Gastrocnemius medialis (tissue), 4 donors: ENCODE measurements at regions of chr10 and their contacts with region 1.

Region 1: DNA sequence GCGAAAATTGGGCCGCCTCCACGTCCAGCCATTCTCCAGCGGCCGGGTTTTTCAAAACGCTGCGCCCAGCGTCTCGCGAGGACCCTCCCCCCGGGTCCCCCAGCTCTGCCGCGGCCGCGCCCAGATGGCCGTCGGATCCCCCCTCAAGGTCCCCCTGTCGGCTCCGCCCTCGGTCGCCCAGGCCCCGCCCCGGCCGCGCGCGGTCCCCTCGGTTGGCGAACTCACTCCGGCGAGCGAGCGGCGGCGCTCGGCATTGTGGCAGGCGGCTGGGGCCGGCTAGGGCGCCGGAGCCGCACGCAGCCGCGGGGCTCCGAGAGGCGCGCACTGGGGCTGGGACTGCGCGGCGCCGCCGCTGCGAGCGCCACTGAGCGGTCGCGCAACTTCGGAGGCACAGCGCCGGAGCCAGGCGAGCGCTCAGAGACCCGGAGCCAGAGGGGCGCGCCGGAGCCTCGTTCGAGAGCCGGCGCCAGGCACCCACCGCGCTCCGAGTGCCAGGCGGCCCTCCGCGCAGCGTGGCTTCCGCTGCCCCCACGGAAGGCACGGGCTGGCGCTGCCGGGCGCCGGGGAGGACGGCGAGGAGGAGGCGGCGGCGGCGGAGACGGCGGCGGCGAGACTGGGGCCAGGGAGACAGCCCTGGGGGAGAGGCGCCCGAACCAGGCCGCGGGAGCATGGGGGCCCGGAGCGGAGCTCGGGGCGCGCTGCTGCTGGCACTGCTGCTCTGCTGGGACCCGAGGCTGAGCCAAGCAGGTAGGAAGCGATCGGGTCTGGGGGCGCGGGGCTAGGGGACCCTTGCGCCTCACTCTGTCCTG is at the start of gene UNC5B:
- DNase-seq: peak; percentile 78 to 86
- ATAC-seq: peak; percentile 69 to 76
- H3K4me3 ChIP-seq: peak within 1 kb of the TSS; percentile 70 to 96 (median 82)
- H3K27ac ChIP-seq: peak within 1 kb of the TSS; percentile 75 to 92 (median 86)
- H3K4me1 ChIP-seq: peaks cover 20 to 26% of the 10 kb centered on the region in 2 donors
- H3K27me3 ChIP-seq: peaks cover 0 to 3% (median 0%) of the 10 kb centered on the region in 3 donors
- CTCF ChIP-seq: peak; percentile 35 to 63 (median 57)
- POLR2A ChIP-seq: peak; percentile 86 to 91
- total RNA-seq, gene UNC5B: 0.65 to 1.2 (median 0.90) TPM

Region 2: DNA sequence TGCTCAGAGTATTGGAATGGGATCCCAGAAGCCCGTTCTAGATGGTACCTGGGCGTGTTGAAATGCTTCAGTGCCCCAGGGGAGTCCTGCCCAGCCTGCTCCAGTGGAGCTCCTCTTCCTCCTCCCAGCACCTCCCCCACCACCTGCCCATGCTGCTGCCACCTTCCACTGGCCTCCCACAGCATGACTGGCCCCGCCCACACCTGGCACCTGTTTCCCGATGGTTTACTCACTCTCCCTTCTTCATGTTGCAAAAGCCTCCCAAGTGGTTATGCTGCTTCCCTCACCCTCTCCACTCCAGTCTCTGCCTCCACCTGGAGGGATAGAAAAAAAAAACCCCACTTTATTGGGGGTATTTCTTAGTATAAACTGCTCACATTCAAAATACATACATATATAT is 292.0 kb before region 1 on chr10:
- in situ Hi-C with region 1: loop called in 2 of 4 experiments (anchors 5 to 10 kb)
- intact Hi-C with region 1: loop called (anchors 1 kb)
- DNase-seq: no peak
- ATAC-seq: no peak
- H3K4me3 ChIP-seq: no peak overlapping the region
- H3K27ac ChIP-seq: no peak overlapping the region
- H3K4me1 ChIP-seq: no peaks in the 10 kb centered on the region
- H3K27me3 ChIP-seq: peaks cover 0 to 3% (median 0%) of the 10 kb centered on the region in 3 donors
- CTCF ChIP-seq: no peak
- POLR2A ChIP-seq: no peak

Region 3: GRCh38 chr10:70925377-70926225 is 286.9 kb before region 1 on chr10:
- in situ Hi-C with region 1: loop called in 2 of 4 experiments (anchors 5 to 10 kb)
- intact Hi-C with region 1: loop called (anchors 1 kb)
- DNase-seq: no peak
- ATAC-seq: peak; percentile 68 to 81
- H3K4me3 ChIP-seq: no peak overlapping the region
- H3K27ac ChIP-seq: no peak overlapping the region
- H3K4me1 ChIP-seq: no peaks in the 10 kb centered on the region
- H3K27me3 ChIP-seq: no peaks in the 10 kb centered on the region
- CTCF ChIP-seq: peak; percentile 82 to 98 (median 93)
- POLR2A ChIP-seq: no peak

Region 4: GRCh38 chr10:71068861-71069271 is 143.7 kb before region 1 on chr10:
- in situ Hi-C with region 1: no loop called
- intact Hi-C with region 1: loop called (anchors 2 kb)
- DNase-seq: peak; percentile 49 to 67
- ATAC-seq: peak; percentile 75 to 91
- H3K4me3 ChIP-seq: no peak overlapping the region
- H3K27ac ChIP-seq: peak overlapping the region; percentile 7 to 74 (median 54)
- H3K4me1 ChIP-seq: peaks cover 16 to 24% of the 10 kb centered on the region in 2 donors
- H3K27me3 ChIP-seq: no peaks in the 10 kb centered on the region
- CTCF ChIP-seq: no peak
- POLR2A ChIP-seq: no peak

Region 5: DNA sequence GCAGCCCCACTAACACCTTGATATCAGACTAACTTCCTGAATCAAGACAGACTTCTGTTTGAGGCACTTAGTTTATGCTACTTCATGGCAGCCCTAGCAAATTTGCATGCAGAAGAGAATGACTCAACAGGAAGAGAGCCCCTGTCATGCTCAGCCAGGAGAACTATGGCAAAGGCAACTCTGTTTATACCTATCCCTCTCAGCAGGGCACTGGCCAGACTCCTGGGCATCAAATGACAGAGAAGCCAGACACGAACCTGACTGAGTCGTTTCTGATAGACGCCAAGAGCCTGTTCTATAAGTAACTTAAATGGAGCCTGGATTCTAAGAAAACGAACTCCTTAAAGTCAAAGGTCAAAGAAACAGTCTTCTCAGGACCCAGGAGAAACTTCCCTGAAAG is 51.1 kb before region 1 on chr10:
- in situ Hi-C with region 1: no loop called
- intact Hi-C with region 1: no loop called
- DNase-seq: peak; percentile 18 to 41
- ATAC-seq: peak; percentile 75 to 78
- H3K4me3 ChIP-seq: no peak overlapping the region
- H3K27ac ChIP-seq: no peak overlapping the region
- H3K4me1 ChIP-seq: peaks cover 11 to 23% of the 10 kb centered on the region in 2 donors
- H3K27me3 ChIP-seq: no peaks in the 10 kb centered on the region
- CTCF ChIP-seq: no peak
- POLR2A ChIP-seq: no peak

Region 6: DNA sequence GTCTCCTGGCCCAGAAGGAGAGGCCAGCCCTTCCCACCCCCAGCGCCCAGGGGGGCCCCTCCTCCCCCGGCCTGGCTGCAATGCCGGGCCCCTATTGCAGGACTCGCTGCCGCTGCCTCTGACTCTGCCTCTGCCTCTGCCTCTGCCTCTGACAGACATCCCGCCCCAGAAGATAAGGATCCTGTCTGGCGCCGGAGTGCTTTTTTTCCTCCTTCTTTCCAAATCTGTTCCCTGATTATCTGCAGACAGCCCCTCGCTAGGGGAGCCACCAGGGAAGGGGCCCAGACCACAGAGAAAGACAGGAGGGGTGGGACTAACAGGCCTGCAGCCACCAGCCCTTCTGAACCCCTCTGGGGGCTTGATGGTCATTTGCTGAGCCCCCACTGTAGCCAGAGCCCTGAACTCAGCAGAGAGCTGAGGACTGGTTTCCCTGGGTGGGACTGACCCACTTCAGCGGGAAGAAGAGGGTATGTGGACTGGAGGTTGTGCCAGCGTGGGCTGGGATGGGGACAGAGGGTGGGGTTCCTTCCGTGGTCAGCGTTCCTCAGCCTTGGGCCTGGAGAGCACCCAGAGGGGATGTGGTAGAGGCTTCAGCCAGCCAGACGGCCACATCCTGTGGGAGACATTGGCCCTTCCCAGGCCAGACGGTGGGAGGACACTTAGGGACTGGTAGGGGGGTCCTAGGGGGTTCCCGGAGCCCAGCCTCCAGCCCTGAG is 22.6 kb after region 1 on chr10:
- in situ Hi-C with region 1: no loop called
- intact Hi-C with region 1: loop called (anchors 1 kb)
- DNase-seq: peak in 1 of 2 donors; percentile 33
- ATAC-seq: no peak
- H3K4me3 ChIP-seq: no peak overlapping the region
- H3K27ac ChIP-seq: no peak overlapping the region
- H3K4me1 ChIP-seq: peaks cover 45 to 52% of the 10 kb centered on the region in 2 donors
- H3K27me3 ChIP-seq: no peaks in the 10 kb centered on the region
- CTCF ChIP-seq: no peak
- POLR2A ChIP-seq: no peak

Region 7: GRCh38 chr10:71270301-71271220 is 58.0 kb after region 1 on chr10:
- in situ Hi-C with region 1: loop called in 1 of 4 experiments (anchors 5 kb)
- intact Hi-C with region 1: loop called (anchors 2 kb)
- DNase-seq: peak in 1 of 2 donors; percentile 33
- ATAC-seq: peak in 1 of 2 donors; percentile 60
- H3K4me3 ChIP-seq: no peak overlapping the region
- H3K27ac ChIP-seq: no peak overlapping the region
- H3K4me1 ChIP-seq: peaks cover 23 to 44% of the 10 kb centered on the region in 2 donors
- H3K27me3 ChIP-seq: no peaks in the 10 kb centered on the region
- CTCF ChIP-seq: peak in 3 of 5 experiments; percentile 42 to 70 (median 69)
- POLR2A ChIP-seq: no peak

Region 8: DNA sequence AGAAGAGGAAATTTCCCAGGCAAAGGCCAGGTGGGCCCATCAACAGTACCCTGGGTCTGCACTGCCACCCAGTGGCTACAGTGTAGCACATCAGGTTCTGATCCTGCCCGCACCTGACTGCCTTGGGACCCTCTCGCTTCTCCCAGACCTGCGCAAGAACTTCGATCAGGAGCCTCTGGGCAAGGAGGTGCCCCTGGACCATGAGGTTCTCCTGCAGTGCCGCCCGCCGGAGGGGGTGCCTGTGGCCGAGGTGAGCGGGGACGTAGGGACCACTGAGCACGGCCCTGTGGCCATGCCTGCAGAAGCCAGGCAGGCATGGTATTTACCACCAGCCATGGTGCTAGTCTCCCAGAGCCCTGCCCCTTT is 72.6 kb after region 1 on chr10:
- in situ Hi-C with region 1: loop called in 2 of 4 experiments (anchors 10 kb)
- intact Hi-C with region 1: loop called (anchors 2 kb)
- DNase-seq: no peak
- ATAC-seq: peak; percentile 66 to 69
- H3K4me3 ChIP-seq: no peak overlapping the region
- H3K27ac ChIP-seq: no peak overlapping the region
- H3K4me1 ChIP-seq: no peaks in the 10 kb centered on the region
- H3K27me3 ChIP-seq: no peaks in the 10 kb centered on the region
- CTCF ChIP-seq: peak; percentile 69 to 89 (median 85)
- POLR2A ChIP-seq: no peak

Region 9: GRCh38 chr10:71383972-71384687 is 171.6 kb after region 1 on chr10:
- in situ Hi-C with region 1: no loop called
- intact Hi-C with region 1: no loop called
- DNase-seq: peak; percentile 24 to 55
- ATAC-seq: peak; percentile 73 to 76
- H3K4me3 ChIP-seq: no peak overlapping the region
- H3K27ac ChIP-seq: no peak overlapping the region
- H3K4me1 ChIP-seq: no peaks in the 10 kb centered on the region
- H3K27me3 ChIP-seq: peaks cover 0 to 3% (median 0%) of the 10 kb centered on the region in 3 donors
- CTCF ChIP-seq: peak; percentile 82 to 95 (median 90)
- POLR2A ChIP-seq: no peak

Region 10: GRCh38 chr10:71795248-71795647 is 582.7 kb after region 1 on chr10:
- in situ Hi-C with region 1: no loop called
- intact Hi-C with region 1: no loop called
- DNase-seq: no peak
- ATAC-seq: no peak
- H3K4me3 ChIP-seq: no peak overlapping the region
- H3K27ac ChIP-seq: no peak overlapping the region
- H3K4me1 ChIP-seq: no peaks in the 10 kb centered on the region
- H3K27me3 ChIP-seq: no peaks in the 10 kb centered on the region
- CTCF ChIP-seq: no peak
- POLR2A ChIP-seq: no peak